Activated CD4-positive, alpha-beta memory T cell treated with anti-CD3 and anti-CD28 coated beads for 36 hours (primary cell): ENCODE measurements at regions of chr7 and their contacts with region 1.

Region 1: DNA sequence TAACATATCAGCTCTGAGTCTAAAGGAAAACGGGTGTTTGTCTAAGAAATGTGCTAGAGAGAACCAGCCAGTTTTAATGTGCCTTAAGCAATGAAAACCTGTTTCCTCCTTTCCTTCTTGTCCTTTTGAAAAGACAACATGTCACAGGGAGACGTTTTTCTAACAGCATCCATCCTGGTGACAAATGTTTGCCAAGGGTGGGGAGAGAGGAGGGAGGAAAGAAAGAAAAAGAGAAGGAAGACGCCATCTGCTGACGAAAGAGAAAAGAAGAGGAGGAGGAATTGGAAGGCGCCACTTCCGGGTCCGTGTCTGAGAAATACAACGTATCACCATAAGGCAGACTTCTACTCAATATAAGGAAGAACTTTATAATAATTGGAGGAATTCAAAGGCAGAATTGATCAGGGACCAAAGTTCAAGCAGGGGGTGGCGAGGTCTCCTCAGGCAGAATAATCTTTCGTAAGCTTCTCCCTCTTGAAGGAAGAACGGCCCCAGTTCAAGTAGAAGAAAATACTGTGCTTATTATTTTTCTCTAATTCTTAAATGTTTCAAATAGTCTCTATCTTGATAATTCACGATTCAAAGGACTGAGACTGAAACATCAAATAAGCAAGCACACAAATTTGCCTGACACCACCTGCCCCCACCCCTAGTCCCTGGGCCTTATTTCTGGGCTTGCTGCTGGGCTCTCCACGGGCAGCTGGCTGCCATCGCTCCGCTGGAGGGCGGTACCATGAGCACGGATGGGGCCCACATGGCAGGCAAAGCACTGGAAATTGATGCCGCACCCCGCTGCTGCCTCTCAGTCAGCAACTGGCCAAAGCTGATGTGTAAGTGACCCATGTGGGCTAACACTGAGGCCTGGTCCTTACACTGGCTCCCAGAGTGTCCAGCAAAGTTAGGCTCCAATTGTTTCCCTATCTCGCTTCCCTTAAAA is 273.7 kb upstream of the KLF14 start:
- DNase-seq: peak; percentile 76
- H3K4me3 Mint-ChIP-seq: peak overlapping the region; percentile 55
- H3K27ac Mint-ChIP-seq: peak overlapping the region; percentile 98
- H3K4me1 Mint-ChIP-seq: peaks cover 88% of the 10 kb centered on the region
- H3K27me3 Mint-ChIP-seq: no peaks in the 10 kb centered on the region

Region 2: DNA sequence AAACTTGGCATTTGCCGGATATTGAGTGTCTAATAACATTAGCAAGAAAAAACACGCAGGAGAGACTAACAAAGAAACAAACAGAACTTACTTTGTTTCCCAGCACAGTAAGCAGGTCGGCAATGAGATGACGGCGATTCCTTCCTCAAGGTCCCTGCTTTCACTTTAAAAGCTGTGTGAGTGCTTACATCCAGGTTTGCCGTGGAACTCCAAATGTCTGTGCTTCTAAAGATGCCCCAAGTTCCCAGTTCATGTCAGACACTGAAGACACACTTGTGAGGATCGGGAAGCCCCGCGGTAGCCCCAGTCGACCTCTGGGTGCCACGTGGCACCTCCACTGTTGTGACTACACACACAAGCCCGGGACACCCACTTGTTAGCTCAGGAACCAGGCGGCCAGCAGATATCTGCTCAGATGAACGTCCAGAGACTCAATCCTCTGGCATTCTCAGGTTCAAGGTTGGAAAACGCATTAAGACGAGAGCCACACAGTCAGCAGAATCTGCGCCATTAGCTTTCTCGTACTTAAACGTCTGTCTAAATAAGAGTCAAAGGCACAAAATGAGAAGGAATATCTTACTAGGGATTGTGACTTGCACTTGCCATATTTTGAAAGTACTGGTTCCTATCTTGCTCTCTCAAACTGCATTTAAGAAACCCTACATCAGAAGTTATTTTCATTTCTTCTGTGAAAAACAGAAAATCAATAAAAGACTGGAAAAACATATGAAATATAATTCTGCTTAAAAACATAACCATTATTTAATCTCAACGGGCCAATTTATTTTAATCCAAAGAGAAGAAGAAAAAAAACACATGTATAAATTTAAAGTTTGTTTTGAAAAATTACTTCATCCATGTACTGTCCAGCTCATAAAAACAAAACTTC is 66.1 kb before region 1 on chr7:
- CTCF ChIA-PET with region 1: interaction called, 3 read pairs
- POLR2A ChIA-PET with region 1: interaction called, 5 read pairs
- intact Hi-C with region 1: loop called (anchors 2 kb)
- DNase-seq: peak; percentile 63
- H3K4me3 Mint-ChIP-seq: peak overlapping the region; percentile 66
- H3K27ac Mint-ChIP-seq: peak overlapping the region; percentile 87
- H3K4me1 Mint-ChIP-seq: peaks cover 89% of the 10 kb centered on the region
- H3K27me3 Mint-ChIP-seq: no peaks in the 10 kb centered on the region

Region 3: GRCh38 chr7:130966246-130967009 is 41.2 kb before region 1 on chr7:
- CTCF ChIA-PET with region 1: interaction called, 3 read pairs
- POLR2A ChIA-PET with region 1: interaction called, 97 read pairs
- intact Hi-C with region 1: loop called (anchors 1 kb)
- DNase-seq: peak; percentile 53
- H3K4me3 Mint-ChIP-seq: peak overlapping the region; percentile 42
- H3K27ac Mint-ChIP-seq: peak overlapping the region; percentile 94
- H3K4me1 Mint-ChIP-seq: peaks cover 77% of the 10 kb centered on the region
- H3K27me3 Mint-ChIP-seq: no peaks in the 10 kb centered on the region

Region 4: DNA sequence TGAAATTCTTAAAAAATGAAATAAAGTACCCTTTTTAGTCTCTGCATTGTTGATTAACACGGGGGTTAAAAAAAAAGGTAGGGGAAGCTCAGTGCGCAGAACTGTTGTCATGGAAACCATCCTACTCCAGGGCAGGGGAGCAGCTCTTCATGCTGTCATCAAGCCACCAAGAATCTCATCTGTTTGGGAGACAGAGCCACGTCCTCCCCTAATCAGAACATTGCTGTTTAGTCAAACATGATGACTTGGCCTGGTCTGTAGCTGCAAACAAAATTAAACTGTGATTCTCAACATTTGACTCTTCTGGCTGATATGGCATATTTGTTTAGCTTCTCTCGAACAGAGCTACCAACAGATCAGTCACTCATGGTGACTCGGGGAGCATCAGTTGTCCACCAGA is 19.2 kb before region 1 on chr7:
- CTCF ChIA-PET with region 1: interaction called, 76 read pairs
- POLR2A ChIA-PET with region 1: interaction called, 42 read pairs
- intact Hi-C with region 1: no loop called
- DNase-seq: peak; percentile 66
- H3K4me3 Mint-ChIP-seq: peak overlapping the region; percentile 52
- H3K27ac Mint-ChIP-seq: peak overlapping the region; percentile 92
- H3K4me1 Mint-ChIP-seq: peaks cover 88% of the 10 kb centered on the region
- H3K27me3 Mint-ChIP-seq: no peaks in the 10 kb centered on the region

Region 5: DNA sequence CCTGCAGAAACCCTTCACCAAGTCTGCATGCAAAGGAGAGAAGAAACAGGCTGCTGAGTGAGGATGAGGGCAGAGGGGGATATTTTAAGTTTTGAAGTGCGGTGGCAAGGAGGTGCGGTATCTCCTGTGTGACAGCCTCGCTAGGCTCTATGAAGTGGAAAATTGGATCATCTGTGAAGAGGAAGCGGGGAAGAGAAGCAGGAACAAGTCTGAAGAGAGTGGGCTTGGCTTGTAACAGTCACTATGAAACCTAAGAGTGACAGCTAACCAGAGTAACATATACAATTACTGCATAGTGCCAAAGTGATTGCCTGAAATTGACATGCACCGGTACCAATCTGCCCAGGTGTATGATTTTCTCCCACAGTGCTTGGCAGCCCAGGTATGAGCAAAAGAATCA is 13.8 kb after region 1 on chr7:
- CTCF ChIA-PET with region 1: interaction called, 3 read pairs
- POLR2A ChIA-PET with region 1: interaction called, 25 read pairs
- intact Hi-C with region 1: loop called (anchors 1 kb)
- DNase-seq: peak; percentile 37
- H3K4me3 Mint-ChIP-seq: peak overlapping the region; percentile 64
- H3K27ac Mint-ChIP-seq: peak overlapping the region; percentile 88
- H3K4me1 Mint-ChIP-seq: peaks cover 80% of the 10 kb centered on the region
- H3K27me3 Mint-ChIP-seq: no peaks in the 10 kb centered on the region

Region 6: GRCh38 chr7:131040467-131040932 is 32.8 kb after region 1 on chr7:
- CTCF ChIA-PET with region 1: interaction called, 20 read pairs
- POLR2A ChIA-PET with region 1: interaction called, 3 read pairs
- intact Hi-C with region 1: no loop called
- DNase-seq: peak; percentile 59
- H3K4me3 Mint-ChIP-seq: no peak overlapping the region
- H3K27ac Mint-ChIP-seq: peak overlapping the region; percentile 78
- H3K4me1 Mint-ChIP-seq: peaks cover 71% of the 10 kb centered on the region
- H3K27me3 Mint-ChIP-seq: no peaks in the 10 kb centered on the region

Region 7: GRCh38 chr7:131124001-131124629 is 116.5 kb after region 1 on chr7:
- CTCF ChIA-PET with region 1: no interaction called
- POLR2A ChIA-PET with region 1: no interaction called
- intact Hi-C with region 1: no loop called
- DNase-seq: no peak
- H3K4me3 Mint-ChIP-seq: no peak overlapping the region
- H3K27ac Mint-ChIP-seq: no peak overlapping the region
- H3K4me1 Mint-ChIP-seq: no peaks in the 10 kb centered on the region
- H3K27me3 Mint-ChIP-seq: peaks cover 3% of the 10 kb centered on the region